ENCODE measurements at regions of chr16 and their contacts with region 1.

Region 1: GRCh38 chr16:82061861-82062525 is 26.9 kb downstream of the HSD17B2 start:
- DNase-seq: no peak
- H3K4me3 ChIP-seq: no peak overlapping the region
- H3K27me3 ChIP-seq: no peaks in the 10 kb centered on the region
- CTCF ChIP-seq: peak; percentile 41

Region 2: DNA sequence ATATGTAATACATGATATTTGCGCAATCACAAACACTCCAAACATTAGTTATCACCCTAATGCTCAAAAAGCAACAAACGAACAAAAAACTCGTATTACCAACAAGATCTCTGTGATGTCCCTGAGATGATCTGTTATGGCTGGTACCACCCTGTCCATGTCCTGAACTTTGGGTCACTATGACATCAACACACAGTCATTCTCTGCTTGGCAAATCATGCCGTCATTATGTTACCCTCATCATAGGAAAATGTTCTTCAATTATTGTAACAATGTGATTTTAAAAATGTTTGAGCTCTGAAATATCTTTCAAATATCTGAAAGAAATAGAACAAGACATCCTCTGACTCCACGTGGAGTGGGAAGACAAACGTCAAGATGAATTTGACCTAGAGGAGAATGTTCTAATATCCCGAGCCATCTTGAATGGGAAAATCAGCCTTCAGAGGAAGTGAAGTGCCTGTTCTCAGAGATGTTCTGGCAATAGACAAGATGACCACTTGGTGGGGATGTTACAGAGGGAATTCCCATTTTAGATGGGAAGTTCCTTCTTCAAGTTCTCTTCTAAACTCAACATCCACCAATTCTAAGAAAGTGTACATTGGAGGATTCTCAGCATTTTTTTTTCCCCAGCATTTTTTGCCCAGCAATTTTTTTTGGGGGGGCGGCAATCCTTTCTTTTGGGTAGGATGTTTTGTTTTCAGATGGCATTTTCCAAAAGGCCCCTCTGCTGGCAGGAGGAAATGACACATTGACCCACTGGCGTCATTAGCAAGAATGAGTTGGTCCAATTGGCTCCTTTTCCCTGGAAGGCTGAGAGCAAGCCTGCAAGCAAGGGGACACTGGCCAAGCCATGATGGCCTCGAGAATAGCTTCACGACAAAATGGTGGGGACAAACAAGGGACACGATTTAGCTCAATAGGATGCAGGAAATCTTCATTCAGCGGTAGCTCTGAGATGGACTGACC is 30.6 kb before region 1 on chr16:
- CTCF ChIA-PET with region 1: interaction called, 10 read pairs
- POLR2A ChIA-PET with region 1: no interaction called
- DNase-seq: peak; percentile 41
- H3K4me3 ChIP-seq: no peak overlapping the region
- H3K27me3 ChIP-seq: no peaks in the 10 kb centered on the region
- CTCF ChIP-seq: peak; percentile 77